ENCODE measurements at regions of chr15 and their contacts with region 1.

Region 1: DNA sequence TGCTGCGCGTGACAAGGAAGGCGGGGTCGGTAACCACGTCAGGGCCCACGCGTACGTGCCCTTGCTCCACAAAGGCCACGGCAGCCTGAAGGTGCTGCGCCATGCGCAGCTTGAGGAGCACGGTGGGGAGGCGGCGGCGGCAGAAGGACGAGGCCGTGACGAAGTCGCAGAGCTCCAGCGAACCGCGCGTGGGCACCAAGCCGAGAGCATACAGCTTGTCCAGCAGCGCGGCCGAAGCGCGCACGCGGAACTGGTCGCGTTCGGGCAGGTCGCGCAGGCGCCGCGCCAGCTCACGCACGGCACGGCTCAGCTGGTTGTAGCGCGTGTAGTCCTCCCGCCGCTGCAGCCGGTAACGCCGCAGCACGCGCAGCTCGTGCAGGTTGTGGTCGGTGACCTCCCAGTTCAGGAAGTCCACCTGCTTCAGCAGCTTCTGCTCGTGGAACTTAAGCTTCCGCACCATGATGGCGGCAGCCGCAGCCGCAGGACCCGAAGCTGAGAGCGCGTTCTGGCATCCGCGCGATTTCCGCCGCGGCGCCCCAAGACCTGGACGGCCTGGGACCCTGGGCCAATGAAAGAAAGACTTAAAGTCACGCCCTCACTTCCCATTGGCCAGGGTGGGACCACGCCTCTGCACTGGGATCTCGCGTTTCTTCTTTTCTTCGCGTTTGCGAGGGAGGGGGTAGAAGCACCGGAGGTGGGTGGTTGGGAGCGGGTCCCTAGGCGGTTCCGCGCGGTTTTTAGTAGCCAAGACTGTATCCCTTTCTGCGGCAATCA is at the start of gene IMP3:
- DNase-seq: peak; percentile 99
- ATAC-seq: peak; percentile 89 to 95
- H3K4me3 ChIP-seq: peak within 1 kb of the TSS; percentile 67
- H3K27ac ChIP-seq: peak within 1 kb of the TSS; percentile 91 to 94
- H3K4me1 ChIP-seq: peaks cover 18% of the 10 kb centered on the region
- CTCF ChIP-seq: no peak
- EP300 ChIP-seq: no peak
- POLR2A ChIP-seq: peak; percentile 96
- RAD21 ChIP-seq: no peak
- polyA plus RNA-seq, gene IMP3: 80.6 and 94.7 TPM in 2 replicates

Region 2: GRCh38 chr15:75508840-75509532 is 130.9 kb before region 1 on chr15:
- CTCF ChIA-PET with region 1: interaction called, 21 read pairs
- POLR2A ChIA-PET with region 1: interaction called, 15 read pairs
- DNase-seq: peak; percentile 33 to 70
- ATAC-seq: peak; percentile 86 to 92
- H3K4me3 ChIP-seq: no peak overlapping the region
- H3K27ac ChIP-seq: no peak overlapping the region
- H3K4me1 ChIP-seq: no peaks in the 10 kb centered on the region
- CTCF ChIP-seq: peak; percentile 63
- EP300 ChIP-seq: no peak
- POLR2A ChIP-seq: no peak
- RAD21 ChIP-seq: peak; percentile 60 to 69

Region 3: GRCh38 chr15:75620058-75620820 is 19.7 kb before region 1 on chr15:
- CTCF ChIA-PET with region 1: interaction called, 30 read pairs
- POLR2A ChIA-PET with region 1: interaction called, 94 read pairs
- DNase-seq: no peak
- ATAC-seq: no peak
- H3K4me3 ChIP-seq: no peak overlapping the region
- H3K27ac ChIP-seq: peak overlapping the region in 1 of 2 experiments; percentile 61; a peak in 2 of 6 replicates
- H3K4me1 ChIP-seq: peaks cover 16% of the 10 kb centered on the region; the same call in 2 of the 3 replicates
- CTCF ChIP-seq: no peak
- EP300 ChIP-seq: no peak
- POLR2A ChIP-seq: no peak
- RAD21 ChIP-seq: no peak

Region 4: DNA sequence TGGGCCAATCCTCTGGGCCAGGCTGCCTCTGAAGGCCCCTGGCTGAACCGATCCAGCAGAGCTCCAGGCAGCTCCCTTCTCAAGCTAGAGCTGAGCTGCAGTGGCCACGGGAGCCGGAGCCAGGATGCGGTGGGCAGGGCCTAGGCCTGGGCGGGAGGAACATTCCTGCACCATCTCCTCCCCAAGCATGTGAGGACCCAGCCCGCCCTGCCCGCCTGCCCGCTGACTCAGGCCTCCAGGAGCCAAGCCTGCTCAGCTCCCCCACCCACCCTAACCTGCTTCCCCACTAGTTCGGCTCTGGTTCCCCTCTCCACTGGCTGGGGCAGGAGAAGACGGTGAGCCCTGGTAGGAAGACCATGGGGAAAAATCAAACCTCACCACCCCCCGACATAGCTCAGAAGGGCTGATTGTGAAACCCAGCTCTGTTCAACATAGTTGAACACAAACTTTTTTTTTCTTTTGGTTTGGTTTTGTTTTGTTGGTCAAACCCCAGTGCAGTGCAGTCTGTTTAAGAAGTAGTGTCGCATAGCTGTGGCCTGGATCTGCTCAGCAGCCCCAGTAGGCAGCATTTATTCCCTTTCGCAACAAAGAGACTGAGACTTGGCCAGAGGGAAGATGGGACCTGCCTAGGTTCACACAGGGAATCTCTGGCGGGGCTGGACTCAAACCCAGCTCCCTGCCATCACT is 21.3 kb after region 1 on chr15:
- CTCF ChIA-PET with region 1: interaction called, 394 read pairs
- POLR2A ChIA-PET with region 1: interaction called, 34 read pairs
- DNase-seq: peak; percentile 83 to 84
- ATAC-seq: peak; percentile 80 to 94
- H3K4me3 ChIP-seq: no peak overlapping the region
- H3K27ac ChIP-seq: peak overlapping the region; percentile 78 to 83
- H3K4me1 ChIP-seq: peaks cover 57% of the 10 kb centered on the region
- CTCF ChIP-seq: no peak
- EP300 ChIP-seq: no peak
- POLR2A ChIP-seq: no peak
- RAD21 ChIP-seq: no peak; a peak in 1 of 5 replicates